Activated CD8-positive, alpha-beta memory T cell treated with anti-CD3 and anti-CD28 coated beads, Interleukin-2, amount 10 ng/mL, durations not matched to agents 7 days and 5 days (primary cell): ENCODE measurements at regions of chr19 and their contacts with region 1.

Region 1: DNA sequence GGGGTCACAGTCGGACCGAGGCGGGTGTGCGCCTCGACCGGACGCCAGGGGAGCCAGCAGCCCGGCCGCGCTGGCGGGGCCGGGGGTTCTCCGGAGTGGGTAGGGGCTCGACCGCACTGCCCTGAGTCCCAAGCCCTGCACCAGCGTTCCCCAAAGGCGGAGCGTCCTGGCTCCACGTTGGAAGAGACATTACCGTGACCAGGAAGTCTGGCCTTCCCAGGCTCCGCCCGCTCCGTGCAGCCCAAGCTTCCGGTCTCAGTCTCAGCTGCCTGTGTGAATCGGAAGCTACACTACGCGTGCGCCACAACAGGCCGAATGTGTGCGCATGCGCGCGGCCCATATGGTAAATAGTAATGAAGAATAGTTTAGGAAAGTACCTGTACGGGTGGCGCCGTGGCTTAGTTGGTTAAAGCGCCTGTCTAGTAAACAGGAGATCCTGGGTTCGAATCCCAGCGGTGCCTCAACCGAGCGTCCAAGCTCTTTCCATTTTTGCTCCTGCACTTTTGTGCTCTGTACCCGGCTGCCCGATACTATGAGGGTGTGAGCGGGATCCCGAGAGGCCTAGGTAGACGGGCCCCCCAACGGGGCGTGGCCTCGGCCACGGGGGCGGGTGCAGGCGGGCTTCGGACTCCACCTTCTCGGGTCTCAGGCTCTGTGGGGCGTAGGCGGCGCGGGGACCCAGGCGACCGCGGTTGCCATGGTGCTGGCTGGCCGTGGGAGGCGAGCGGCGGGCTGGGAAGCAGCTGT is 17.3 kb upstream of the LRP3 start:
- DNase-seq: peak; percentile 97
- ATAC-seq: peak; percentile 86
- H3K4me3 Mint-ChIP-seq: peak overlapping the region; percentile 99
- H3K27ac Mint-ChIP-seq: peak overlapping the region; percentile 93
- H3K4me1 Mint-ChIP-seq: peaks cover 27% of the 10 kb centered on the region
- H3K27me3 Mint-ChIP-seq: peaks cover 5% of the 10 kb centered on the region

Region 2: GRCh38 chr19:32976208-32976805 is 200.5 kb before region 1 on chr19:
- CTCF ChIA-PET with region 1: interaction called, 10 read pairs
- DNase-seq: peak; percentile 84
- ATAC-seq: no peak
- H3K4me3 Mint-ChIP-seq: no peak overlapping the region
- H3K27ac Mint-ChIP-seq: peak overlapping the region; percentile 28
- H3K4me1 Mint-ChIP-seq: peaks cover 20% of the 10 kb centered on the region
- H3K27me3 Mint-ChIP-seq: no peaks in the 10 kb centered on the region

Region 3: DNA sequence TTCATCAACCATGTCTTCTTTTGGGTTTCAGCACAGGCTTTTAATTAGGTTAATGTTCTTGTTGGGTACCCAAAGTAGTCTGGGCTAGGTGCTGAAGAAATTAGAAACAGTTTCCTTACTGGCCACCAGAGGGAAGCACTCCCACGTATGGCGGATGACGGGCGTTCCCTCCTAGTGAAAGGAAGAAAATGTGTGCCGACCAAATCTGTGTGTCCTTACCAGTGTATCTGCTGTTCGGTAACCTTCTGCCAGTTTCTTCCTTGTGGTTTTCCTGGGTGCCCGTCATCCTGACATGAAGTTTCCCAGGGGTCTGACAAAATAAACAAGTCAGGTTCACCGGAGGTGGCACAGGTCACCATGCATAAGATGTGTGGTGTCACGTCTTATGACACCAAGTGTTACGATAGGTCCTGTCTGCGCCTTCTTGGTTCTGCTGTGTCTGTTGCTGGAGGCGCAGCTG is 50.9 kb before region 1 on chr19:
- CTCF ChIA-PET with region 1: interaction called, 23 read pairs
- DNase-seq: peak; percentile 66
- ATAC-seq: peak; percentile 90
- H3K4me3 Mint-ChIP-seq: no peak overlapping the region
- H3K27ac Mint-ChIP-seq: no peak overlapping the region
- H3K4me1 Mint-ChIP-seq: peaks cover 4% of the 10 kb centered on the region
- H3K27me3 Mint-ChIP-seq: no peaks in the 10 kb centered on the region

Region 4: GRCh38 chr19:33143897-33144405 is 32.9 kb before region 1 on chr19:
- CTCF ChIA-PET with region 1: interaction called, 33 read pairs
- DNase-seq: peak; percentile 72
- ATAC-seq: peak; percentile 98
- H3K4me3 Mint-ChIP-seq: no peak overlapping the region
- H3K27ac Mint-ChIP-seq: no peak overlapping the region
- H3K4me1 Mint-ChIP-seq: peaks cover 6% of the 10 kb centered on the region
- H3K27me3 Mint-ChIP-seq: peaks cover 7% of the 10 kb centered on the region

Region 5: DNA sequence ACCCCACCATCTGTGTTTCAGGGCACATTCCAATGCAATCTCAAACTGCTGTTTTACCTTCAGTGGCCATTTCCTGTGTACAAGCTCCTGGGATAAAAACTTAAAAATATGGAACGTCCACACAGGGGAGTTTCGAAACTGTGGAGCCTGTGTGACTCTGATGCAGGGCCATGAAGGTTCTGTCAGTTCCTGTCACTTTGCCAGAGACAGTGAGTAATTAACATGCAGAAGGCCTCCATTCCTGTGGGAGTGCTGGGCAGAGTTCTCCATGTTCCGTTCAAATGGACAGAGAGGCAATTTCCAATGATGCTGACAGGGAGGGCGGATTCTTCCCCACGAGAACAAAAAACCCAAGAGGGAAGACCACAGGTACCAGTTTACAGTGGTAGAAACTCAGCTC is 20.5 kb before region 1 on chr19:
- CTCF ChIA-PET with region 1: interaction called, 112 read pairs
- DNase-seq: no peak
- ATAC-seq: no peak
- H3K4me3 Mint-ChIP-seq: no peak overlapping the region
- H3K27ac Mint-ChIP-seq: no peak overlapping the region
- H3K4me1 Mint-ChIP-seq: peaks cover 34% of the 10 kb centered on the region
- H3K27me3 Mint-ChIP-seq: no peaks in the 10 kb centered on the region